ENCODE measurements at regions of chr2 and their contacts with region 1.

Region 1: DNA sequence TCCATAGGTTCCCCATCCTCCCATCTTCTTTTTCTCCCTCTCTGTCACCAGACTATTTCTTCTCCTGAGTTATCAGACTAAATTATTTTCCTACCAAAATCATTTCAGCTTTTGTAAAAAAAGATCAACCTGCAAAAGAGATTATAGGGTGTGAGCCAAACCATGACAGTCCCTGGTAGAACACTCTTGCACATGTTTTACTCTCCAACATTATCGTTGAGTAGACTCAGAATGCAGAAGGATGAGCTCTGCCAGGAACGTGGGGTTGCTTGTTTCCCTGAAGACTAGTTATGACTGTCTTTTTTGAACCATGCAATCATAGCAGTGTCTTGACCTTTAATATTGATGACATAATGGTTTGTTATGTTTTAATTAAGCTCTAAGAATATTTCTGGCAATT is 360.1 kb upstream of the VWC2L start:
- DNase-seq: no peak
- H3K4me3 ChIP-seq: no peak overlapping the region
- H3K27ac ChIP-seq: no peak overlapping the region
- H3K4me1 ChIP-seq: no peaks in the 10 kb centered on the region
- H3K27me3 ChIP-seq: no peaks in the 10 kb centered on the region
- CTCF ChIP-seq: no peak
- EP300 ChIP-seq: no peak
- POLR2A ChIP-seq: no peak

Region 2: GRCh38 chr2:212766919-212767556 is 1283.7 kb before region 1 on chr2:
- in situ Hi-C with region 1: no loop called
- intact Hi-C with region 1: loop called (anchors 10 kb)
- DNase-seq: no peak
- H3K4me3 ChIP-seq: no peak overlapping the region
- H3K27ac ChIP-seq: no peak overlapping the region
- H3K4me1 ChIP-seq: no peaks in the 10 kb centered on the region
- H3K27me3 ChIP-seq: no peaks in the 10 kb centered on the region
- CTCF ChIP-seq: no peak
- EP300 ChIP-seq: no peak
- POLR2A ChIP-seq: no peak